CD8-positive, alpha-beta memory T cell (primary cell): ENCODE measurements at regions of chr12 and their contacts with region 1.

Region 1: GRCh38 chr12:76621582-76622024 is 62.0 kb upstream of the OSBPL8 start:
- DNase-seq: peak; percentile 45 to 75 (median 51)
- H3K4me3 ChIP-seq: no peak overlapping the region
- H3K4me3 Mint-ChIP-seq: no peak overlapping the region
- H3K27ac ChIP-seq: no peak overlapping the region
- H3K27ac Mint-ChIP-seq: no peak overlapping the region
- H3K4me1 ChIP-seq: no peaks in the 10 kb centered on the region
- H3K4me1 Mint-ChIP-seq: peaks cover 0 to 3% (median 2%) of the 10 kb centered on the region in 3 donors
- H3K27me3 ChIP-seq: no peaks in the 10 kb centered on the region
- H3K27me3 Mint-ChIP-seq: peaks cover 0 to 4% of the 10 kb centered on the region in 2 donors

Region 2: GRCh38 chr12:76726626-76727025 is 105.0 kb after region 1 on chr12:
- CTCF ChIA-PET with region 1: no interaction called
- POLR2A ChIA-PET with region 1: no interaction called
- DNase-seq: no peak
- H3K4me3 ChIP-seq: no peak overlapping the region
- H3K4me3 Mint-ChIP-seq: no peak overlapping the region
- H3K27ac ChIP-seq: no peak overlapping the region
- H3K27ac Mint-ChIP-seq: no peak overlapping the region
- H3K4me1 ChIP-seq: no peaks in the 10 kb centered on the region
- H3K4me1 Mint-ChIP-seq: no peaks in the 10 kb centered on the region
- H3K27me3 ChIP-seq: no peaks in the 10 kb centered on the region
- H3K27me3 Mint-ChIP-seq: no peaks in the 10 kb centered on the region

Region 3: GRCh38 chr12:76790564-76791552 is 169.3 kb after region 1 on chr12:
- CTCF ChIA-PET with region 1: interaction called, 58 read pairs
- POLR2A ChIA-PET with region 1: no interaction called
- DNase-seq: peak in 2 of 5 donors; percentile 30 to 34
- H3K4me3 ChIP-seq: no peak overlapping the region
- H3K4me3 Mint-ChIP-seq: no peak overlapping the region
- H3K27ac ChIP-seq: no peak overlapping the region
- H3K27ac Mint-ChIP-seq: peak overlapping the region in 3 of 8 donors; percentile 4 to 37 (median 21)
- H3K4me1 ChIP-seq: no peaks in the 10 kb centered on the region
- H3K4me1 Mint-ChIP-seq: peaks cover 29 to 49% (median 33%) of the 10 kb centered on the region in 3 donors
- H3K27me3 ChIP-seq: no peaks in the 10 kb centered on the region
- H3K27me3 Mint-ChIP-seq: no peaks in the 10 kb centered on the region